Posterior cingulate gyrus (tissue), 11 donors: ENCODE measurements at regions of chr7 and their contacts with region 1.

Region 1: GRCh38 chr7:92447345-92448204 is at the start of gene GATAD1:
- DNase-seq: peak; percentile 92 to 99 (median 94)

Region 2: GRCh38 chr7:91832493-91833045 is 615.0 kb before region 1 on chr7:
- intact Hi-C with region 1: loop called (anchors 5 kb)
- DNase-seq: no peak

Region 3: DNA sequence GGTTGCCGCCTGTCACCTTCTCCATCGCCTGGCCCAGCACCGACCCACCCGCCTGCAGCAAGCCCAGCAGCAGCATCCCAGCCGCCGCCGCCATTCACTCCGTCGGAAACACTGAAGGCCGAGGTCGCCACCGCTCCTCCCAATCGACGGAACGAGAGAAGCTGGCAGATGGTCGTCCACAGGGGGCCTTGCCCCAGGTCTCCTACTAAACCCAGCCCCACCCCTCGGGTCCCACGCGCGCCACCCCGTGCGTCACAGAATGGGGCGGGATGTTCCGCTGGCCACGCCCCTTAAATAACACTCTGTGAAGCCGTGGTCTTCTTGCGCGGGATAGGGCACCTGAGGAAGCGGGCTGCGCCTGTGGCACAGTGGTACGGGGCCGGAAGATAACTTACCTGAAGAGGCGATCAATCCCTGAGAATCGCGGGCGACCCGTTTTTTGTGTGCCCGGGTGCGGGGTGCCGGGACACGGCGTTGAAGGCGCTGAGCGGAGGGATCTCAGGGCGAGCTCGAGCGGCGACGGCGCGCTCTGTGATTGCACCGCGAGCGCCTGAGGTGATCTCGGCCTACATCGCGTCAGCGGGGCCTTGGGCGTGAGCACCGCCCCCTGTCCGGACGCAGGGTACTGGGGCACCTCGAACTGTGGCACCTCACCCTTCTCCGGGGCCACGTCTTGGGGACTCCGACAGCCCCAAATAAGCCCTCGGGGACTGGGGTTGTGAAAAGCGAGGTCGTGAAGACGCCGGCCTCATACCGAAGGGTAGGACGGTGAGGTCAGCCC is 313.1 kb before region 1 on chr7 and contains the start of gene CYP51A1:
- intact Hi-C with region 1: loop called (anchors 5 kb)
- DNase-seq: peak; percentile 90 to 99 (median 94)

Region 4: GRCh38 chr7:92421676-92422435 is 25.7 kb before region 1 on chr7:
- intact Hi-C with region 1: loop called (anchors 1 kb)
- DNase-seq: no peak

Region 5: GRCh38 chr7:93055543-93056107 is 608.0 kb after region 1 on chr7:
- intact Hi-C with region 1: loop called (anchors 10 kb)
- DNase-seq: no peak